HepG2 (cell line): ENCODE measurements at regions of chr12 and their contacts with region 1.

Region 1: DNA sequence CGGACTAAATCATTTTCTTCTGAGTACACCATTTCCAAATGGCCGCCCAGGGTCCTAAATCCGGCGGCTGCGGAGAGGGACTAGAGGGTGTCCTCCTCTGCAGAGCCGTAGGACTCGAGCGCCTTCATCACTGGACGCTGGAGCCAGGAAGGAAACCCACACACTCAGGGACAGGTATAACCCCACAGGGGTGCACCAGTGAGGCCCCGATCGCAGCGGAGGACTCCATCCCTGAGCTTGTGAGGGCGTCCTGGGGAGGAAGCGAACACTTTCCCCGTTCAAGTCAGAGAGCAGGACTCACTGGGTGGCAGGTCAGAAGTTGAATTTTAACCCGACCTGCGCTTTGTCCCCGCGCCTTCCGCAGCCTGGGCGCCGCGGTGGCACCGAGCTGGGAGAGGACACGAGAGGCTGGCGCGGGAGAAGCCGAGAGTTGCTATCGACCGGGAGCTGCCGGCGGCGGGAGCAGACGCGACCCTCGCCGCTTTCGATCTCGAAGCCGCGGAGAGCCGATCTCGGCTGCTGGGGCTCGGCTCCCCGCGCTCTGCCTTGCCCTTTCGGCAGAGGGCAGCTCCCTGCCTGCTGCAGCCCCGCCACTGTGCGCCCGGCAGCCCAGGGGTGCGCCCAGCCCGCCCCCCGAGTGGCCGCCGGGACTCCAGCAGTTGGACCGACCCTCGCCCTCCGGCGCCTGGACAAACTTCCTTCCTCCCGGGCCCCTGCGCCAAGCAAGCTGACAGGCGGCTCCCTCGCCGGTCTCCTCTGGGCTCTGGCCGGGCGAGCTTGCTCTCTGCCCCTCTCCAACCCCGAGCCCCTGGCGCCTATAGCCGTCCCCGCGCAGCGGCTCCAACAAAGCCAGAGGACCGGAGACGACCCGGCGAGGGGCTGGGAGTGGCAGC is 990 bp downstream of the LIN7A start:
- DNase-seq: peak; percentile 79
- ATAC-seq: peak; percentile 90
- H3K4me3 ChIP-seq: peak overlapping the region; percentile 80 to 95 (median 83)
- H3K27ac ChIP-seq: peak overlapping the region; percentile 98
- H3K4me1 ChIP-seq: peaks cover 74% of the 10 kb centered on the region
- H3K27me3 ChIP-seq: no peaks in the 10 kb centered on the region; a peak in 2 of 5 replicates
- CTCF ChIP-seq: peak; percentile 26; the same call in 1 of the 2 replicates
- EP300 ChIP-seq: no peak
- POLR2A ChIP-seq: peak; percentile 81 to 89
- RAD21 ChIP-seq: peak; percentile 56

Region 2: DNA sequence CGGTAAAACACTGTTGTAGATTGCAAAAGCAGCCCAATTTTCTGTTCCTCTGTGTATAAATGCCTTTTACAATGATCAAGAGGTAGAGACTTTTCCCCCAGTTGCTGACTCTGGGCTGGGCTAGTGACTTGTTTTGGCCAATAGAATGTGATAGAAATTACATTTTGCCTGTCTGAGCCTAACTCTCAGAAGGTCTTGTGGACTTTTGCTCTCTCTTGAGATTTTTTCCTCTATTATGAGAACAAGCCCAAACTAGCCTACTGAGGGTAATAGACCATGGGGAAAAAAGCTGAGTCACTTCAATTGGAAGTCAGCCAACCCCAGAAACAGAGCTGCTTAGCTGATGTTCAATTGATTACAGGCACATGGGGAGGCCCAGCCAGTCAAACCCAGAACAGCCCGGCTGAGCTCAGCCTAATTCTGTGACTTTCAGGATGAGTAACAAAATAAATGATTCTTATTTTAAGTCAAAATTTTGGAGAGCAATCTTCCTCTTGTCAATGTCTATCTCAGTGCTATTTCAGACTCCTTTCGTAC is 158.7 kb before region 1 on chr12:
- CTCF ChIA-PET with region 1: no interaction called
- POLR2A ChIA-PET with region 1: interaction called, 13 read pairs
- in situ Hi-C with region 1: no loop called
- intact Hi-C with region 1: loop called (anchors 5 kb)
- DNase-seq: peak; percentile 96
- ATAC-seq: peak; percentile 98
- H3K4me3 ChIP-seq: no peak overlapping the region
- H3K27ac ChIP-seq: peak overlapping the region; percentile 90
- H3K4me1 ChIP-seq: peaks cover 48% of the 10 kb centered on the region
- H3K27me3 ChIP-seq: no peaks in the 10 kb centered on the region
- CTCF ChIP-seq: no peak
- EP300 ChIP-seq: peak; percentile 57 to 90; a peak in 3 of 4 replicates
- POLR2A ChIP-seq: no peak
- RAD21 ChIP-seq: no peak

Region 3: DNA sequence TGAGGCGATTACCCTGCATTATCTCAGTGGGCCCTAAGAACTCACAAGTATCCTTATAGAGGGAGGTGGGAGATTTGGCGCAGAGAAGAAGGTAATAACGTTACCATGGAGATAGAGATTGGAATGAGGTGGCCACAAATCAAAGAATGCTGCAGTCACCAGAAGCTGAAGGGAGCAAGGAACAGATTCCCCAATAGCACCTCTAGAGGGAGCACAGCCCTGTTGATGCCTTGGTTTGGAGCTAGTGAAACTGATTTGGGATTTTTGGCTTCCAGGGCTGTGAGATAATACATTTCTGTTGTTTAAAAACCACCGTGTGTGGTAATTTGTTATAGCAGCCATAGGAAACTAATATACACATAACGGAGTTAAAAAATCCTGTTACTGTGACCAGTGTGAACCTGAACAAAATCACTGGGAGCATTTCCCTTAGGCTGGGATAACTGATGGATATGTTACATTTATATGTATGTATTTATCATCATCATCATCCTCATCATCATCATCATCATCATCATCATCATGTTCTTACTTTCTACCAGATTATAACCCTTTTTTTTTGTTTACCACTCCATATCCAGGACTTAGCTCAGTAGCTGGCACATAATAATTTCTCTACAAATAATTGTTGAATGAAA is 99.3 kb before region 1 on chr12:
- CTCF ChIA-PET with region 1: no interaction called
- POLR2A ChIA-PET with region 1: interaction called, 13 read pairs
- in situ Hi-C with region 1: loop called (anchors 5 kb)
- intact Hi-C with region 1: loop called (anchors 5 kb)
- DNase-seq: peak; percentile 61
- ATAC-seq: peak; percentile 95
- H3K4me3 ChIP-seq: no peak overlapping the region
- H3K27ac ChIP-seq: no peak overlapping the region
- H3K4me1 ChIP-seq: peaks cover 19% of the 10 kb centered on the region
- H3K27me3 ChIP-seq: no peaks in the 10 kb centered on the region
- CTCF ChIP-seq: peak; percentile 75
- EP300 ChIP-seq: no peak
- POLR2A ChIP-seq: no peak
- RAD21 ChIP-seq: peak; percentile 65

Region 4: GRCh38 chr12:80925234-80925633 is 11.5 kb before region 1 on chr12:
- CTCF ChIA-PET with region 1: no interaction called
- POLR2A ChIA-PET with region 1: interaction called, 58 read pairs
- in situ Hi-C with region 1: no loop called
- intact Hi-C with region 1: loop called (anchors 2 kb)
- DNase-seq: no peak
- ATAC-seq: peak; percentile 50
- H3K4me3 ChIP-seq: peak overlapping the region in 1 of 3 experiments; percentile 59; a peak in 2 of 6 replicates
- H3K27ac ChIP-seq: peak overlapping the region; percentile 83
- H3K4me1 ChIP-seq: peaks cover 50% of the 10 kb centered on the region
- H3K27me3 ChIP-seq: no peaks in the 10 kb centered on the region
- CTCF ChIP-seq: no peak
- EP300 ChIP-seq: no peak
- POLR2A ChIP-seq: no peak
- RAD21 ChIP-seq: no peak

Region 5: DNA sequence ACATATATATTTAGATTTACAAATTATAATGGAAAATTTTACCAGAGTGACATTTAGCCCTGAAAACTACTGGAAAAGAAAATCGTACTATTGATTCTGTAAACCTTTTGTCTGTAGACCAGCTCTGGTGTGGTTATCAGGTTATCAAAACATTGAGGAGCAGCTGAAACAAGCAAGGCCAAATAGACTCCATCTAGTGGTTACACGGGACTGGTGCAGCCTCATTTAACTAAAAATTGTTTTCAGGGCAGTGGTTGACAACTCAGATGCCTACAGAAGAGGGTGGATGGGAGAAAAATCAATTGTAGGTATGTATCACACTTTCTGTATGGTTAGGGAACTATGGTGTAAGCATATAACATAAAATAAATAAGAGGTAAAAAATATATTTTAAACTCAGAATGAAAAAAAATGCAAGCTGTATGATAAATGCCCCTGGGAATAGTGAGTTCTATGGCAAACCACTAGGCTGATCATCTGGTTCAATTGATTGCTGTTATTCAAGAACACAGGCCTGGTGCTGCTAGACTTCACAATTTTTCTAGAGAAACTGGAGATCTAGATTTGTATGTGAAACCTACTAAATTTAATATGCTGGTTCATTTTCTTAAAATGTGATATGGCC is 192.3 kb after region 1 on chr12:
- CTCF ChIA-PET with region 1: no interaction called
- POLR2A ChIA-PET with region 1: interaction called, 10 read pairs
- in situ Hi-C with region 1: no loop called
- intact Hi-C with region 1: loop called (anchors 5 kb)
- DNase-seq: peak; percentile 72
- ATAC-seq: peak; percentile 90
- H3K4me3 ChIP-seq: no peak overlapping the region
- H3K27ac ChIP-seq: peak overlapping the region; percentile 31
- H3K4me1 ChIP-seq: peaks cover 22% of the 10 kb centered on the region
- H3K27me3 ChIP-seq: no peaks in the 10 kb centered on the region
- CTCF ChIP-seq: peak; percentile 73
- EP300 ChIP-seq: no peak
- POLR2A ChIP-seq: no peak
- RAD21 ChIP-seq: peak; percentile 39; the same call in 1 of the 2 replicates

Region 6: GRCh38 chr12:81147292-81147919 is 210.7 kb after region 1 on chr12:
- CTCF ChIA-PET with region 1: no interaction called
- POLR2A ChIA-PET with region 1: interaction called, 10 read pairs
- in situ Hi-C with region 1: no loop called
- intact Hi-C with region 1: loop called (anchors 2 kb)
- DNase-seq: peak; percentile 25
- ATAC-seq: peak; percentile 74
- H3K4me3 ChIP-seq: no peak overlapping the region
- H3K27ac ChIP-seq: peak overlapping the region; percentile 89
- H3K4me1 ChIP-seq: peaks cover 61% of the 10 kb centered on the region
- H3K27me3 ChIP-seq: no peaks in the 10 kb centered on the region
- CTCF ChIP-seq: peak; percentile 69
- EP300 ChIP-seq: no peak
- POLR2A ChIP-seq: no peak
- RAD21 ChIP-seq: no peak

Region 7: DNA sequence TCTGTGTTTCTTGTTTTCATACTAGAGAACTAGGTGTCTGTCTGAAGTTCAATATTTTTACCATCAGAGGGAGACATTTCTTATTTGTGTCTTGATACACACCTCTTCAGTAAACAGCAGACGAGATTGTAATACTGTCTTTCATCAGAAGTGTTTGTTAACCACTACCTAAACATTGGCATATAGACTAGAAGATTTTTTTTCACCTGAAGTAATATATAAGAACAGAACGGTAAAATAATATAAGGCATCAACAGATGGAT is 331.9 kb after region 1 on chr12:
- CTCF ChIA-PET with region 1: no interaction called
- POLR2A ChIA-PET with region 1: no interaction called
- in situ Hi-C with region 1: no loop called
- intact Hi-C with region 1: no loop called
- DNase-seq: peak; percentile 32
- ATAC-seq: peak; percentile 87
- H3K4me3 ChIP-seq: no peak overlapping the region
- H3K27ac ChIP-seq: no peak overlapping the region
- H3K4me1 ChIP-seq: no peaks in the 10 kb centered on the region
- H3K27me3 ChIP-seq: no peaks in the 10 kb centered on the region
- CTCF ChIP-seq: peak; percentile 36
- EP300 ChIP-seq: no peak
- POLR2A ChIP-seq: no peak
- RAD21 ChIP-seq: no peak